ENCODE measurements at regions of chr7 and their contacts with region 1.

Region 1: GRCh38 chr7:17640730-17641377 is 299.4 kb downstream of the SNX13 start:
- DNase-seq: no peak
- ATAC-seq: no peak
- H3K4me3 ChIP-seq: no peak overlapping the region
- H3K27ac ChIP-seq: peak overlapping the region; percentile 10; the same call in 1 of the 2 replicates
- H3K4me1 ChIP-seq: no peaks in the 10 kb centered on the region
- H3K27me3 ChIP-seq: no peaks in the 10 kb centered on the region
- CTCF ChIP-seq: peak; percentile 81

Region 2: DNA sequence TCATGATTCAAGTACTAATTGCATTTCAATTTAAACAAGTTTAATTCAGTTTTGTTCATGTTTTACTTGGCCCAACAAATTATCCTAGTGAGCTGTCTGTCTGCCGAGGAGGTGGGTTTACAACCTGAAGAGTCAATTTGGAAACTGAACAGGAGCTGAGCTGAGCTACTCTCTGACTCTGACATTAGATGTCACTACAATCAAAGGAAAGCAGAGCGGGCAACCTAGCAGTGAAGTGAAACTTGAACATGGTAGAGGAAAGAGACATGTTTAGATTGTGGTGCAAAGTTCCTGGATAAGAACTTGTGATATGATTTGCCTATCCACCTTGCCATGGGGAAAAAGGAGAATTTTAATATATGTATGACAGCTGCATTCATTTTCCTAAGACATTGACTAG is 749.5 kb before region 1 on chr7:
- CTCF ChIA-PET with region 1: no interaction called
- POLR2A ChIA-PET with region 1: no interaction called
- in situ Hi-C with region 1: no loop called
- intact Hi-C with region 1: loop called (anchors 10 kb)
- DNase-seq: peak; percentile 65
- ATAC-seq: peak; percentile 96
- H3K4me3 ChIP-seq: no peak overlapping the region
- H3K27ac ChIP-seq: peak overlapping the region; percentile 53; the same call in 1 of the 2 replicates
- H3K4me1 ChIP-seq: peaks cover 18% of the 10 kb centered on the region
- H3K27me3 ChIP-seq: no peaks in the 10 kb centered on the region
- CTCF ChIP-seq: peak; percentile 81

Region 3: DNA sequence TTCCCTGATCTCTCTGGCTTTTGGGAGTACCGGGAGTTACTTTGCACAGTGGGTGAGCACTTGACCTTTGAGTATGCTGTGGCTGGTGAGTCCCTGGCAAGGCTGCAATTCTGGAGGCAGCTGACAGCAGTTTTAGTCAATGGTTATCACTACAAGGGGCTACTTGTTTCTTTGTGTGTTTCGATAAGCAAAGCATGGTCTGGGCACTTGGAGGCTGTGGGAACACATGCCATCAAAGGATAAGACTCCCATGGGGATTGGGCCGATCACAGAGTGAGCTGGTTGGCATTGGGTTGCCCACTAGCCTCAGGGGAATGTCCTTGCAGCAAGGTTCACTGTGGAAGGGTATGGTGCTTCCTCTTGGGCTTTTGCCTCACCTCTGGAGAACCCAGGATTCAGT is 91.2 kb after region 1 on chr7:
- CTCF ChIA-PET with region 1: no interaction called
- POLR2A ChIA-PET with region 1: no interaction called
- in situ Hi-C with region 1: no loop called
- intact Hi-C with region 1: no loop called
- DNase-seq: no peak
- ATAC-seq: no peak
- H3K4me3 ChIP-seq: no peak overlapping the region
- H3K27ac ChIP-seq: no peak overlapping the region
- H3K4me1 ChIP-seq: no peaks in the 10 kb centered on the region
- H3K27me3 ChIP-seq: no peaks in the 10 kb centered on the region
- CTCF ChIP-seq: no peak

Measured in Panc1 (cell line).